ENCODE measurements at regions of chr6 and their contacts with region 1.

Region 1: DNA sequence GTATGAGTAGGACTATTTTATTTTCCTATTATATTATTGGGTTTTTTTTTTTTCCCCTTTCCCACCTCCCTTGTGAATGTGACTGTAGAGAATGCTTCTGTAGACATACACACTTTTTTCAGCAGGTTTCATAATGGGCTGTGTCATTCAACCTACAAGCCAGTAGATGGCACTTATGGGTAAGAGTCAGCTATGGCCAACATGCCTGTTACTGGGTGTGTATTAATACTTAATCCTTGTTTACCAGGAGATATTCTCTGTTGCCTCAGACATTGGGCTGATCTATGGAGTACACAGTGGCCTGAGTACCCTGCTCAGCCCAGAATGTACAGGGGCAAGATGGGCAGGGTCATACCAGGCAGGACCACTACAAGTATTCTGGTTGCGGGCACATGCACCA is 382.5 kb downstream of the EPHA7 start:
- DNase-seq: peak; percentile 18
- ATAC-seq: peak; percentile 55; the same call in 1 of the 2 replicates
- H3K4me3 ChIP-seq: no peak overlapping the region
- H3K27ac ChIP-seq: no peak overlapping the region
- H3K4me1 ChIP-seq: no peaks in the 10 kb centered on the region
- H3K27me3 ChIP-seq: no peaks in the 10 kb centered on the region
- CTCF ChIP-seq: peak; percentile 48

Region 2: DNA sequence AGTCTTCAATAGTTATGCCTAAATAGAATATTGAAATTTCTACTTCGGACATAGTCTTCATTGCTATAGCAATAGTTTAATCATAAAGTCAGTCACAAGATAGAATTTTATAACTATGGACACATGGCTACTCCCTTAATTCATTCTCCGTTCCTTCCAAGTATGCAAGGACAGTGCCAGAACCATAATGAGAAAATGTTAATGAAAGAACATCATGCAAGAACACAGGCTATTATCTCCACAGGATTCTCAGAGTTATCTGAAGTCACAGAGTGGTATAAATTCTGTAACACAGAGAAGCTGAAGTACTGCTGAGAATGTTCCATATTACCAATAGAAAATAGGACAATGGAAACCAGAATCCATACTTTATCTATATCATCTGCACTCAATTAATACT is 443.6 kb before region 1 on chr6:
- CTCF ChIA-PET with region 1: no interaction called
- POLR2A ChIA-PET with region 1: no interaction called
- intact Hi-C with region 1: no loop called
- DNase-seq: no peak
- ATAC-seq: no peak
- H3K4me3 ChIP-seq: no peak overlapping the region
- H3K27ac ChIP-seq: no peak overlapping the region
- H3K4me1 ChIP-seq: 0 out of 2 replicates have a peak, but pooled peaks cover 2% of the 10 kb centered on the region
- H3K27me3 ChIP-seq: no peaks in the 10 kb centered on the region
- CTCF ChIP-seq: no peak

Region 3: GRCh38 chr6:93248631-93249030 is 211.8 kb after region 1 on chr6:
- CTCF ChIA-PET with region 1: no interaction called
- POLR2A ChIA-PET with region 1: no interaction called
- intact Hi-C with region 1: loop called (anchors 10 kb)
- DNase-seq: no peak
- ATAC-seq: peak; percentile 82
- H3K4me3 ChIP-seq: no peak overlapping the region
- H3K27ac ChIP-seq: no peak overlapping the region
- H3K4me1 ChIP-seq: no peaks in the 10 kb centered on the region
- H3K27me3 ChIP-seq: no peaks in the 10 kb centered on the region
- CTCF ChIP-seq: no peak

Region 4: GRCh38 chr6:93260881-93261280 is 224.0 kb after region 1 on chr6:
- CTCF ChIA-PET with region 1: no interaction called
- POLR2A ChIA-PET with region 1: no interaction called
- intact Hi-C with region 1: loop called (anchors 5 kb)
- DNase-seq: no peak
- ATAC-seq: no peak
- H3K4me3 ChIP-seq: no peak overlapping the region
- H3K27ac ChIP-seq: no peak overlapping the region
- H3K4me1 ChIP-seq: peaks cover 5% of the 10 kb centered on the region; the same call in 1 of the 2 replicates
- H3K27me3 ChIP-seq: no peaks in the 10 kb centered on the region
- CTCF ChIP-seq: no peak

Region 5: DNA sequence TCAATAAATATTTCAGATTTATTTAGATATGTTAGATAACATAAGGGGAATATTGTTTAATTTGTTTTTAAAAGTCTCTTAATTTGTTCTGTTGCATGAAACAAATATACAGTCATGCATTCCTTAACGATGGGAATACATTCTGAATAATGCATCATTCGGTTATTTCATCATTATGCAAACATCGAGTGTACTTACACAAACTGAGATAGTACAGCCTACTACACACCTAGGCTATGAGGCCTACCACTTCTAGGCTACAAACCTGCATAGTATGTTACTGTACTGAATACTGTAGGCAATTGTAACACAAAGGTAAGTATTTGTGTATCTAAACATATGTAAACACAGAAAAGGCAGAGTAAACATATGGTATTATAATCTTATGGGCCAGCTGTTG is 263.8 kb after region 1 on chr6:
- CTCF ChIA-PET with region 1: no interaction called
- POLR2A ChIA-PET with region 1: no interaction called
- intact Hi-C with region 1: loop called (anchors 10 kb)
- DNase-seq: peak; percentile 56
- ATAC-seq: peak; percentile 94
- H3K4me3 ChIP-seq: no peak overlapping the region
- H3K27ac ChIP-seq: no peak overlapping the region
- H3K4me1 ChIP-seq: no peaks in the 10 kb centered on the region
- H3K27me3 ChIP-seq: no peaks in the 10 kb centered on the region
- CTCF ChIP-seq: no peak

Measured in PC-3 (cell line).